H1 (cell line): ENCODE measurements at regions of chr12 and their contacts with region 1.

Region 1: DNA sequence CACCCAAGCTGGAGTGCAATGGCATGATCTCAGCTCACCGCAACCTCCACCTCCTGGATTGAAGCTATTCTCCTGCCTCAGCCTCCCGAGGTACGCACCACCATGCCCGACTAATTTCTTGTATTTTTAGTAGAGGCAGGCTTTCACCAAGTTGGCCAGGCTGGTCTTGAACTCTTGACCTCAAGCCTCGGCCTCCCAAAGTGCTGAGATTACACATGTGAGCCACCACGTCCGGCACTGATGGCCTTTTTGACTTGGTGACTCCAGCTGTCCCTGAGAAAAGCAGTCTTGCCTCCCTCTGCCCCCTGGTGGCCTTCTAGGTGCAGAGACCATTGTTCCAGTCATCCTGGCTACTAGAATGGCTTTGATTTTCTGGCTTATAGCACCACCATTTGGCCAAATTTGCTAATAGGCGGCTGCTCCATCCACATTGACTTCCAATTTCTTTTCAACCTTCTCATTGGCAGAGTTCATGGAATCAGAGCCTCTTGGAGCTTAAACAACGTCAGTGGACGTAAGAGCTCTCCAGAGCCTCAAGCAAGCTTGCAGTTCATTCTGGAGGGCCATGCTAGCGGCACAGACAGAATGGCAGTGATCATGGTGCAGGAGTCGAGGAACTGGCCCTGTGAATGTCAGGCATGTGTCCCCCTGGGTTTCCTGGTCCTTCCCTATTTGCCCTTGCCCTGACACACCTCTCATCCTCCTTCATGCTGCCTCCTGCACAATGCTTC is 25.4 kb upstream of the EIF4B start:
- DNase-seq: peak; percentile 84 to 88
- H3K4me3 ChIP-seq: no peak overlapping the region
- H3K27ac ChIP-seq: no peak overlapping the region
- H3K4me1 ChIP-seq: peaks cover 0 to 10% (median 0%) of the 10 kb centered on the region in 4 experiments; a peak in 1 of 7 replicates
- H3K27me3 ChIP-seq: no peaks in the 10 kb centered on the region
- CTCF ChIP-seq: peak; percentile 92 to 100 (median 100)
- EP300 ChIP-seq: no peak
- POLR2A ChIP-seq: no peak
- RAD21 ChIP-seq: peak; percentile 100

Region 2: DNA sequence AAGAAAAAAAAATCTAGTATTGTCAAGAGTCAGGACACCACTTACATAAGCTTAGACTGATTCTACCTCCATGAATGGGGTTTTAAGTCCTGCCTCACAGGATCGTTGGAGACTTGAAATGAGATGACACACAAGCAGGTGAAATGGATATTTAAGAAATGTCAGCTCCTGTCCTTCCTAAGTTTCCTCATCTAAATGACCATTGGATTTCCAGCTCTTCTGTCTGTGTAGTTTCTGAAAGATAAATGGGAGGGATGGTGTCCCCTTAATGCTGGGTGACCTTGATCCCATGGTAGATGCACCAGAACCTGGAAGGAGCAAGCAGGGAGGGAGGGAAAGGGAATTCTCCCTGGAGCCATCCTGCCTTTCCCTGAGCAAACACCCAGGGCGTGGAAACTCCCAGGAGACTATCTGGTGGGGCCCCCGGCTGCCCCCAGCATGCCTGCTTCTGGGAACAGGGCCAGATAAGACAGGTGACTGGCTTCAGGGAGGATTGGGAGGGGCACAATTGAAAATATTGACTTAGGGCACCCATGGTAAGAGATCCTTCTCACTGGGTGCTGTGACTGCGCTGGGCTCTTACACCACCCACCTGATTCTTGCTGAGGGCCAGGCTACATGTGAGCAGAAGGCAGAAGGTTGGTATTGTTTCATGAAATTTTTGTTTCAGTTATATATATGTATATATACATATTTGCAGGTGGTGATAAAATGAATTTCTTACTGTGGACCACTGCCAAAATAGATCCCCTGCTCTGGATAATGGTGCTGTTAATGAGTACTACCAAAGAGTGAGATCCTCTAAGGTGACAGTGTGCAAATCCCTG is 85.6 kb before region 1 on chr12:
- CTCF ChIA-PET with region 1: interaction called, 1,250 read pairs
- POLR2A ChIA-PET with region 1: interaction called, 4 read pairs
- DNase-seq: no peak
- H3K4me3 ChIP-seq: no peak overlapping the region
- H3K27ac ChIP-seq: no peak overlapping the region
- H3K4me1 ChIP-seq: no peaks in the 10 kb centered on the region
- H3K27me3 ChIP-seq: no peaks in the 10 kb centered on the region
- CTCF ChIP-seq: no peak
- EP300 ChIP-seq: no peak
- POLR2A ChIP-seq: no peak
- RAD21 ChIP-seq: no peak

Region 3: GRCh38 chr12:52924764-52925716 is 55.8 kb before region 1 on chr12:
- CTCF ChIA-PET with region 1: interaction called, 64 read pairs
- POLR2A ChIA-PET with region 1: interaction called, 5 read pairs
- DNase-seq: no peak
- H3K4me3 ChIP-seq: no peak overlapping the region
- H3K27ac ChIP-seq: no peak overlapping the region
- H3K4me1 ChIP-seq: peaks cover 0 to 24% (median 9%) of the 10 kb centered on the region in 4 experiments; a peak in 6 of 7 replicates
- H3K27me3 ChIP-seq: no peaks in the 10 kb centered on the region
- CTCF ChIP-seq: no peak
- EP300 ChIP-seq: no peak
- POLR2A ChIP-seq: no peak
- RAD21 ChIP-seq: no peak

Region 4: DNA sequence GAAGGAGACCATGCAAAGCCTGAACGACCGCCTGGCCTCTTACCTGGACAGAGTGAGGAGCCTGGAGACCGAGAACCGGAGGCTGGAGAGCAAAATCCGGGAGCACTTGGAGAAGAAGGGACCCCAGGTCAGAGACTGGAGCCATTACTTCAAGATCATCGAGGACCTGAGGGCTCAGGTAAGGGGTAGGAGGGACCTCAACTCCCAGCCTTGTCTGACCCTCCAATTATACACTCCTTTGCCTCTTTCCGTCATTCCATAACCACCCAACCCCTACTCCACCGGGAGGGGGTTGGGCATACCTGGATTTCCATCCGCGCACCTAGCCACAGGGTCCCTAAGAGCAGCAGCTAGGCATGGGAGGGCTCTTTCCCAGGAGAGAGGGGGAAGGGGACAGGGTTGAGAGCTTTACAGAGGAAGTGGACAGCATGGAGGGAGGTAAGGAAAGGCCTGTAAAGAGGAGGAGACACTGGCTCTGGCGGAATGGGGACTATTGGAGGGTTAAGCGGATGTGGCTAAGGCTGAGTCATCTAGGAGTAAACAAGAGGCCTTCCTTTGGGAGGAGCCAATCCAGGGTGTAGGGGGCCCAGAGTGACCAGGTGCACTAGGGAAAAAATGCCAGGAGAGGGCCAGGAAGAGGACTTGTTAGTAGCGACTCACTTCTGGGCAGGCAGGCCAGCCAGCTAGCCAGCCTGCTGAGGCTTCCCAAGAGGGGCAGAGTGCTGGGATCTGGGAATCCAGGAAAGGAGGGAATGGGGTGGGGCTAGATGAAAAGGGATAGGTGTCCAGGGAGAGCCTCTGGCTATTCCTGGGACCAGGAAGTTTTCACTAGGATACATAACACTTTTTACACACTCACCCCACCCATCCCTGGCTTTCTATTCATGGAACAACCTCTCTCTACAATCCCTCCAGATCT is 31.2 kb before region 1 on chr12:
- CTCF ChIA-PET with region 1: interaction called, 31 read pairs
- POLR2A ChIA-PET with region 1: interaction called, 9 read pairs
- DNase-seq: peak in 1 of 2 experiments; percentile 62
- H3K4me3 ChIP-seq: peak overlapping the region; percentile 88 to 98 (median 93)
- H3K27ac ChIP-seq: peak overlapping the region; percentile 83
- H3K4me1 ChIP-seq: peaks cover 18 to 38% (median 29%) of the 10 kb centered on the region in 4 experiments
- H3K27me3 ChIP-seq: no peaks in the 10 kb centered on the region
- CTCF ChIP-seq: no peak
- EP300 ChIP-seq: no peak
- POLR2A ChIP-seq: peak; percentile 73 to 85
- RAD21 ChIP-seq: peak in 1 of 2 experiments; percentile 3; a peak in 1 of 4 replicates

Region 5: GRCh38 chr12:52969828-52970569 is 10.9 kb before region 1 on chr12:
- CTCF ChIA-PET with region 1: interaction called, 84 read pairs
- POLR2A ChIA-PET with region 1: interaction called, 10 read pairs
- DNase-seq: no peak
- H3K4me3 ChIP-seq: no peak overlapping the region
- H3K27ac ChIP-seq: no peak overlapping the region
- H3K4me1 ChIP-seq: peaks cover 4 to 10% (median 7%) of the 10 kb centered on the region in 4 experiments
- H3K27me3 ChIP-seq: peaks cover 0 to 9% (median 5%) of the 10 kb centered on the region in 4 experiments; a peak in 3 of 7 replicates
- CTCF ChIP-seq: no peak
- EP300 ChIP-seq: no peak
- POLR2A ChIP-seq: no peak
- RAD21 ChIP-seq: no peak